ENCODE measurements at regions of chr18 and their contacts with region 1.

Region 1: GRCh38 chr18:11040823-11041656 is 108.3 kb downstream of the PIEZO2 start:
- DNase-seq: peak; percentile 50
- CTCF ChIP-seq: peak; percentile 77

Region 2: GRCh38 chr18:10851824-10852319 is 189.2 kb before region 1 on chr18:
- CTCF ChIA-PET with region 1: interaction called, 97 read pairs
- POLR2A ChIA-PET with region 1: interaction called, 4 read pairs
- DNase-seq: peak; percentile 52
- CTCF ChIP-seq: peak; percentile 58

Region 3: DNA sequence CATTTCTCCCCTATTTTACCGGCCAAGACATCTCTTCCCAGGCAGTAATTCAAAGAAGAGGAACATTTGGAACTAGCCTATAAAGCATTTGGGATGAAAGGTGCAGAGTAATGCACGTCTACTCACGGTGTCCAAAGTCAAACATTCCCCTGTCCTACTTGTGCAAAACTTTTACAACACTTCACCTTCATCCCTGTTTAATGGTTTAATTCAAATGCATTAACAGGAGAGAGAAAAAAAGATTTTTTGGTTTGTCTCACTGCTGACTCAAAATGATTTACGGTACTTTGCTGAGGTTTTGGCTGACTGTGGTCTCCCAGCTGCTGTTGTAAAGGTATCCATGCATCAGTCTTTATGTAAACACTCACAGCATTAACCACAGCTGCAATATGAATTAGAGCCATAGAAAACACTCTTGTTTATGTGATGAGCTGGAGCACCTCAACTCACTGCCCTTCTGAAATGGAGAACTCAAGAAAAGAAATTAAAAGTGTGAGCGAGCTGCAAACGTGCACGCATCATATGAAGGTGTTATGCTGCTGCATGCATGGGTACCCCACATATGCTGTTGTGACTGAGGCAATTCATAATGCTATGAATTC is 112.2 kb before region 1 on chr18:
- CTCF ChIA-PET with region 1: interaction called, 37 read pairs
- POLR2A ChIA-PET with region 1: no interaction called
- DNase-seq: peak; percentile 66
- CTCF ChIP-seq: no peak

Region 4: DNA sequence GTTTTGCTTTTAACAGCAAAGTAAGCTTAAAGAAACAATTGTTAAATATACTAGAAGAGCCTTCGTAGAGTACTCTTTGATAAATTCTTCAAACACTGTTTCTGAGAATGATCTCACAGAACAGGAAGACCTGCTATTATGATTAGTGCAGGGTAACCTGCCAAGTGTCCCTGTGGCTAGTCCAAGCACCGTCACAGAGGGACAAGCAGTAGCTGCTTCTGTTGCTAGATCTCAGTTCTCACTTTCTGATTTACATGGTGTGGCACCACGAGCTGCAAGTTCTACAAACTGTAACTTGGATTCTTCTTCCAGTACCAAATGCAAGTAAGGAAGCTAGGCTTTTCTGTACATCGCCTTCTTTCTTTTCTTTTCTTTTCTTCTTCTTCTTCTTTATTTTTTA is 13.2 kb before region 1 on chr18:
- CTCF ChIA-PET with region 1: interaction called, 118 read pairs
- POLR2A ChIA-PET with region 1: no interaction called
- DNase-seq: peak; percentile 57
- CTCF ChIP-seq: no peak

Region 5: DNA sequence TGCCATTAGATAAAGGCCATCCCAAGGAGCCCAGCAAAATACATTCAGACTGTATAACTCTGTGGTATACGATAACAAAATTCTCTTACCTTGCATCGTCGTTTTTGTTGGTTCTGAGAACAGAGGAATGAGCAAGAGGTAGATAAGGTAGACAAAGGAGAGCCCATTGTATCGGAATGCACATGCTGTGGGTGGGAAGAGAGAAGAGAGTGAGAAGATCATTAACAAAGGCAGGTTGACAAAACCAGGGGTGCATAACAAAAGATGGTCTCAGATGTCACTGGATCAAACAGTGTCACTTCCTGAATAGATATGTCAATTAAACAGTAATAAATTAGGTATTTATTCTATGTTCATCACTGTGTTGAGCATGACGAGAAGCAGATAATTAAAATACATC is 25.0 kb after region 1 on chr18:
- CTCF ChIA-PET with region 1: interaction called, 12 read pairs
- POLR2A ChIA-PET with region 1: no interaction called
- DNase-seq: no peak
- CTCF ChIP-seq: no peak

Region 6: DNA sequence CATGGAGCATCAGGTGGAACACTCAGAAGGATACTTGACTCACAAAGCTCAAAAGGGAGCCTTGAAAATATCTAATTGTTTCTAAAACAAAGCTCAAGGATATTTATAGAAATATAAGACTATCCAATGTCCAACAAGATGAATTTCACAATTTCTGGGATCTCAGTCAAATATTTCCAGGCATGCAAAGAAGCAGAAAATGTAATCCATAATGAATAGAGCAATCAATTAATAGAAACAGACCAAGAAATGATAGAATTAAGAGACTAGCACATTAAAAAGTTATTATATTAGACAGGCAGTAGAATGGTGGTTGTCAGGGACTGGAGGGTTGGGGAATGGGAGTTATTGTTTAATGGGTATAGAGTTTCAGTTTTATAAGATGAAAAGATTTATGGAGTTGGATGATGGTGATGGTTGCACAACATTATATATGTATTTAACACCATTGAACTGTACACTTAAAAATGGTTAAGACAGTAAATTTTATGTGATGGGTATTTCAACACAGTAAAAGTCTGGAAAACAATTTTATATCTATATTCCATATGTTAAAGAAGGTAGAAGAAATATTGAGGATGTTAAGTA is 298.2 kb after region 1 on chr18:
- CTCF ChIA-PET with region 1: no interaction called
- POLR2A ChIA-PET with region 1: no interaction called
- DNase-seq: no peak
- CTCF ChIP-seq: no peak

Measured in GM10248 (cell line).